ENCODE measurements at regions of chr15 and their contacts with region 1.

Region 1: GRCh38 chr15:64067564-64068030 is 21.3 kb upstream of the DAPK2 start:
- DNase-seq: peak; percentile 73
- ATAC-seq: peak; percentile 75

Region 2: DNA sequence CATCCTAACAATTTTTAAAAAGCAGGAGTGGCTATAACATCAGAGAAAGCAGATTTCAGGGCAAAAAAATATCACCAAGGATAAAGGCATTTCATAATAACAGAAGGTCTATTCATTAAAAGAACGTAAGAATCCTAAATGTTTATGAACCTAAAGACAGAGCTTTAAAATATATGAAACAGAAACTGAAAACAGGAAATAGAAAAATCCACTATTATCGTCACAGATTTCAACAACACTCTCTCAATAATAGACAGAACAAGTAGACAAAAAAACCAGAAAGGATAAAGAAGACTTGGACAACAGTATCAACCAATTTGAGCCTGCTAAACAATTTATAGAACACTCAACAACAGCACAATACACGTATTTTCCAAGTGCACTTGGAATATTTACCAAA is 399.0 kb before region 1 on chr15:
- intact Hi-C with region 1: loop called (anchors 10 kb)
- DNase-seq: no peak
- ATAC-seq: no peak

Region 3: DNA sequence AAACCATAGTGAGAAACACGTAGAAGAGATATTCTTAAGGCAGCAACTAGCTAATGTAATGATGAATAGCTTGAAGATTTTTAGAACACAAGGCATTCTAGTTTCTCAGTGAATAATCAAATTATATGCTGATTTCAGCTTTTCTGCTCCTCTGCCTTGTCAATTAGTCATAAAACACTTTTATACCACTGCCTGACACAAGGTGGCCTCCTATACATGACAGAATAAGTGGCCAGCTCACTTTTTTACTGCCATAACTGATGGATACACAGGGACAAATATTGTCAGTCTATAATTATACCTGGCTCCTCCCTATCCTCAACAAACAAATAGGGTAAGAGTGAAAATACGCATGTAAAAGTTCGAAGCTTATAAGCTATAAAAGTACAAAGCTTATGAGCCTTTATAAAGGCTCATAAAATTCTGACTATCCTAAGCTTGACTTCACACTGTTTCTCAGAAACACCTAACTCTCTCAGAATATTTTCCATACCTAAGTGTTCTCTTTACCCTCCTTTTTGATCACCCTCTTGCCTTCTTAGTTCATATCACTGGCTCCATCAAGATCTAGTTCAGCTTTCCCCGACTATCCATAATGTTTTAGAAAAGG is 315.4 kb before region 1 on chr15:
- intact Hi-C with region 1: loop called (anchors 5 kb)
- DNase-seq: no peak
- ATAC-seq: peak; percentile 79

Measured in sciatic nerve (tissue), 2 donors.